Heart right ventricle (tissue), 16 donors: ENCODE measurements at regions of chr1 and their contacts with region 1.

Region 1: DNA sequence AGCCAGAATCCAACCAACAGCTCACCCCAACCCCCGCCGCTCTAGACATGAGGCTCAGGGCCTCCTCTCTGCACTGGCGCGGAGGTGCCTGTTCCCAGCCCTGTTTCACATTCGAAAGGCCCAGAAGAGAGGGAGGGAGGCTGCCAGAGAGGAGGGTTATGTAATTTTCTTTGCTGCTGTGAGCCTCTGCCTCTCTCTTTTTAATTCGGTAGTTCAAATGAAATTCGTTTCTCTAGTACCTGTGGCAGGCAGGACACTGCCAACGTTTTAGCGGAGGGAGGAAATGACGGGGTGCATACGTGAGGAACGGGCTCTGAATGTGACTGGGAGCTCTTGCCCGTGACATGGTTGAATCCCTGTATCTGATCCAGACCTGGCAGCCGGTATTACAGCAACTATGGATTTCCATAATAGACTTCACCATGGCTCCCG is 9.4 kb downstream of the PRDM16 start:
- DNase-seq: no peak
- ATAC-seq: peak in 5 of 8 donors; percentile 18 to 41 (median 38)
- H3K4me3 ChIP-seq: no peak overlapping the region
- H3K27ac ChIP-seq: peak overlapping the region in 9 of 10 donors; percentile 6 to 72 (median 63)
- H3K4me1 ChIP-seq: peaks cover 2 to 81% (median 53%) of the 10 kb centered on the region in 9 donors
- H3K27me3 ChIP-seq: peaks cover 0 to 58% (median 19%) of the 10 kb centered on the region in 7 donors
- CTCF ChIP-seq: no peak

Region 2: DNA sequence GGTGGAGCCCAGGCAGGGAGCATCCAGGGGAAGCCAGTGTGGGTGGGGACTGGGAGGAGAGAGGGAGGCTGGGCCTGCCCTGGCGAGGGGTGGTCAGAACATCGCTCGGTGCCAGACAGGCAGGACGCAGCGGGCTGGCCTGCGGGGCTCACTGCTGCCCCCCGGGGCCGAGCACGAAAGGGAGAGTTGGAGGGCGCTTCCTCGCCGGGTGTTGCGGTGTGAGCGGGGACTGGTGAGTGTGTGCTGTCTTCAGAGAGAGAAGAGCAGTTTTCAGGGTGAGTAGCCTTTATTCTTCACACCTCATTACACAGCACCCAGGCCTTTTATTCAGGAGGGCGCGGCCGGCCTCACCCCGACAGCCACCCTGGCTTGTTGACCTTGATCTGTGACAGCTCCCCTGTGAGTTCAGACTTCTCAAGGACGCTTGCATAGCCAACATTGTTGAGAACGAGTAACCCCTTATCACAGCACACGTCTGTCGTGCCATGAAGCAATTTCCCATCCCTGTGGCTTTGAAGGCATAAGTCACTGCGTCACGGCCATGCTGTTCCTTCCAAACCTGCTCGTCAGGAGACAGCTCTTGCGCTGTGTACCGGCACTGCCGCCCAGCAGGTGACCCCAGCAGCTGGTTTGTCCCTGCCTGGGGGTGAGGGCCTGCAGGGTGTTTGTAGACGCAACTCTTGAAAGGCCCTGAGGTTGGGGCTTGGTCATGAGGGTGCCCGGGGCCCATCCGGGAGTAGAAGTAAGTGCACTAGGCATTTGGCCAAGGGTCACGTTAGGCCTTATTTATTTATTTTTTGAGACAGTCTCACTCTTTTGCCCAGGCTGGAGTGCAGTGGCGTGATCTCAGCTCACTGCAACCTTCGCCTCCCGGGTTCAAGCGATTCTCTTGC is 973.6 kb before region 1 on chr1:
- intact Hi-C with region 1: loop called in 1 of 10 experiments (anchors 5 kb)
- DNase-seq: peak in 1 of 2 donors; percentile 10
- ATAC-seq: peak in 4 of 8 donors; percentile 11 to 38 (median 24)
- H3K4me3 ChIP-seq: no peak overlapping the region
- H3K27ac ChIP-seq: peak overlapping the region in 1 of 10 donors; percentile 53
- H3K4me1 ChIP-seq: no peaks in the 10 kb centered on the region
- H3K27me3 ChIP-seq: peaks cover 0 to 7% (median 0%) of the 10 kb centered on the region in 7 donors
- CTCF ChIP-seq: no peak

Region 3: DNA sequence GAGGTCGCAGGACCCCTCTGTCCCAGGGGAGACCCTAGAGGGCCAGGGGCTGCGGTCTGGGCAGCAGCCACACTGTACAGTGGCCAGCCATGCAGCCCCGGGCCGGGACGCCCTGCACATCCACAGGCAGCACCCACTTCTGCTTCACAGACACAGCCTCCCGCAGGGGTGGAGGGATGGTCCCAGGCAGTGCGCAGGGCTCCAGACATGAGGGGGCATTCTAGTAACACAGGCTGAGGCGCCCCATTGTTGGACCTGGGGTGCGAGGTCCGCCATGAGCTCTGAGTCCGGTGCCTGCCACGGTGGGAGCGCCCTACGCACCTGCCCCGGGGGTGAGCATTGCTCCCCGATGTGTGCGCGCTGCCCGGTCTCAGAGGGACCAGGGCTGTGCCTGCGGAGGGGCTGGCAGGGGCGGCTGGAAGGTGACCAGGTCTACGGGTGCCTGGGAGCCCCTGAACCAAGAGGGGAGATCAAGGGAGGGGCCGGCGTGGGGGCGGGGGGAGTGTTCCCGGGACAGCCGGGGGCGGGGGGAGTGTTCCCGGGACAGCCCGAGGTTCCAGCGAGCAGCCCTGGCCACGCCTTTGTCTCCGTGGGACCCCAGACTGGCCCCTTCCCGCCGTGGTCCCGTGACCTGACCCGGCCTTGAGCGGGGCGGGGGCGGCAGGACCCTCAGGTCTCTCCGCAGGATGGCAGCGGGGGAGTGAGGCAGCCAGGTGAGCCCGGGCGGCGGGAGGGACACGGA is 450.1 kb before region 1 on chr1:
- intact Hi-C with region 1: no loop called
- DNase-seq: no peak
- ATAC-seq: peak in 1 of 8 donors; percentile 24
- H3K4me3 ChIP-seq: no peak overlapping the region
- H3K27ac ChIP-seq: no peak overlapping the region
- H3K4me1 ChIP-seq: peaks cover 0 to 14% (median 4%) of the 10 kb centered on the region in 9 donors
- H3K27me3 ChIP-seq: peaks cover 26 to 85% (median 79%) of the 10 kb centered on the region in 7 donors
- CTCF ChIP-seq: no peak

Region 4: GRCh38 chr1:3052511-3052910 is 25.9 kb before region 1 on chr1:
- intact Hi-C with region 1: no loop called
- DNase-seq: no peak
- ATAC-seq: no peak
- H3K4me3 ChIP-seq: no peak overlapping the region
- H3K27ac ChIP-seq: no peak overlapping the region
- H3K4me1 ChIP-seq: no peaks in the 10 kb centered on the region
- H3K27me3 ChIP-seq: peaks cover 0 to 29% (median 12%) of the 10 kb centered on the region in 7 donors
- CTCF ChIP-seq: no peak

Region 5: DNA sequence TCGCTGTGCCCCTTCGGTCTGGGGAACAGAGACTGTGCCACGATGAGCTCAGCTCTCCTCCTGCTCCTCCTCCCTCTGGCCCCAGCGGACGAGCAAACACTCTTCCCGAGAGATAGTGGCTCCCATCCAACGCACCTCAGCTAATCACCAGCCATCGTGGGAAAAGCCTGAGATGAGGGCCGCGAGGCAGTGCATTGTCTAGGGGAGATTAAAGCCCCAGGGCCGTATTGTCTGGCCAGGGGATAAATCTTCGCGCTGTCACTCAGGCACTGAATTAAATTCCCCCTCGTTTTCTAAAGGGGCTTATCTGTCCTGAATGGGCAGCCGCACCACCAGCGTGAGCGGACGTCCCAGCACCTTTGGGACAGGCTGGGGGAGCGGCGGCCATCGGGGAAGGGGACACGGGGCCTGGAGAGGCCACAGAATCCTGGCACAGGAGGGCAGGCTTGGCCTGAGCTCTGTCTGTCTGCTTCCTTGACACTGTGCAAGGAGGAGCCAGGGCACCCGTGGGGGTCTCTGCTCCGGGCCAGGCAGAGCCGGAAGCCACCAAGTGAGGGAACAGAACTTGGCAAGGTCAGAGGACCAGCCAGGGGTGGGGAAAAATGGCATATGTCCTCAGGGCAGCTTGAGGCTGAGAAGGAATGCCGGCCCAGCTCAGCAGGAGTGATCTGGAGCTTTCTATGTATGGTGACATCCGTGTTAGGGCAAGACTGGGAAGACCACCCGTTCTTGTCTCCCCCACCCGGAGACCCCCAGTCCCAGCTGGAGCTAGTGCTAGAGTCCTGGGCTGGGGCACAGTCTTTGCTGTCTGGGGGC is 22.9 kb after region 1 on chr1:
- intact Hi-C with region 1: no loop called
- DNase-seq: no peak
- ATAC-seq: peak in 7 of 8 donors; percentile 8 to 37 (median 17)
- H3K4me3 ChIP-seq: no peak overlapping the region
- H3K27ac ChIP-seq: peak overlapping the region in 3 of 10 donors; percentile 0 to 22 (median 19)
- H3K4me1 ChIP-seq: peaks cover 0 to 59% (median 30%) of the 10 kb centered on the region in 9 donors
- H3K27me3 ChIP-seq: peaks cover 0 to 5% (median 0%) of the 10 kb centered on the region in 7 donors
- CTCF ChIP-seq: no peak

Region 6: DNA sequence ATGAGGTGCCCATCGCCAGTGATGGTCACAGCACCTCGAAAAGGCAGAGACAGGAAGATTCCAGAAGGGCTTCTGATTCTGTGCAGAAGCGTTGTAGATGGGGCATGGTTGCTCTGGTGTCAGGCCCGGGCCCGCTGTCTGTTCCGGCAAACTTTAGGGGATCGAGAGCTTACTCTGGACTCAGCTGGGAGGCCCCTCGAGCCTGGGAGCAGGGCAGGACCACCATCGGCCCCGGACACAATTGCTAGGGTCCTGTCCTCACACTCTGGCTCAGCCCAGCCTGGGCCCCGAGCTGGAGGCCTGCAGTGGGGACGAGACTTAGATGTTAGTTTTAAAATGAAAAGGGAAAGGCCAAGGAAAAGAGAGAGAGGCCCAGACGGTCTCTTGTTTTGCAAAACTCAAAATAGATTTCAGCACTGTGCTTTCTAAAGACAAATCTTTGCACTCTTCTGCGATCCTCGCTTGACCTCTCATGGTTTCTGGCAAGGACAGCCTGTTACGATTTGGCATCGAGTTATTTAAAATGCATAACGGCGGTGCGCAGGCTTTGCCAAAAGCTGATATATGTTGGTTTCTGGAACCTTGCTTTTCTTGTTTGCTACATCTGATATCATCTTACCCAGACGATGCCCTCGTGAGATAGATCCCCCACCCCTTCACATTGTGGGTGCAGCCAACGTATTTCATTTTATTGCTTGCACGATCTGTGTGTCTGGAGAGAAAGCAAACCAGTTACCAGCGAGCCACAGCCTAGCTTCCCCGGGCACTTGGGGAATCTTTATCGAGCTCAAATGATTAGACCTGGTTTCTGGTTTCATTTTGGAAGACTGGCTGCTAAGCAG is 48.5 kb after region 1 on chr1:
- intact Hi-C with region 1: loop called in 3 of 10 experiments (anchors 5 to 10 kb)
- DNase-seq: no peak
- ATAC-seq: peak in 7 of 8 donors; percentile 6 to 59 (median 31)
- H3K4me3 ChIP-seq: peak overlapping the region in 3 of 10 donors; percentile 2 to 19 (median 9)
- H3K27ac ChIP-seq: peak overlapping the region; percentile 64 to 86 (median 74)
- H3K4me1 ChIP-seq: peaks cover 22 to 79% (median 50%) of the 10 kb centered on the region in 9 donors
- H3K27me3 ChIP-seq: no peaks in the 10 kb centered on the region
- CTCF ChIP-seq: no peak